Natural killer cell (primary cell): ENCODE measurements at regions of chr11 and their contacts with region 1.

Region 1: GRCh38 chr11:33700425-33701271 is at the start of gene C11orf91:
- DNase-seq: peak; percentile 95 to 97
- ATAC-seq: peak; percentile 96 to 98 (median 97)
- H3K4me3 ChIP-seq: peak within 1 kb of the TSS; percentile 69
- H3K4me3 Mint-ChIP-seq: peak within 1 kb of the TSS; percentile 89
- H3K27ac ChIP-seq: no peak within 1 kb of the TSS
- H3K27ac Mint-ChIP-seq: peak within 1 kb of the TSS; percentile 74 to 80
- H3K4me1 ChIP-seq: peaks cover 12% of the 10 kb centered on the region
- H3K4me1 Mint-ChIP-seq: peaks cover 16% of the 10 kb centered on the region in 2 donors
- H3K27me3 ChIP-seq: no peaks in the 10 kb centered on the region
- H3K27me3 Mint-ChIP-seq: peaks cover 24 to 25% of the 10 kb centered on the region in 2 donors
- CTCF ChIP-seq: no peak
- total RNA-seq, gene C11orf91: not detected

Region 2: GRCh38 chr11:33606762-33607161 is 93.9 kb before region 1 on chr11:
- intact Hi-C with region 1: no loop called
- DNase-seq: no peak
- ATAC-seq: no peak
- H3K4me3 ChIP-seq: no peak overlapping the region
- H3K4me3 Mint-ChIP-seq: no peak overlapping the region
- H3K27ac ChIP-seq: no peak overlapping the region
- H3K27ac Mint-ChIP-seq: no peak overlapping the region
- H3K4me1 ChIP-seq: no peaks in the 10 kb centered on the region
- H3K4me1 Mint-ChIP-seq: no peaks in the 10 kb centered on the region
- H3K27me3 ChIP-seq: no peaks in the 10 kb centered on the region
- H3K27me3 Mint-ChIP-seq: peaks cover 7 to 42% of the 10 kb centered on the region in 2 donors
- CTCF ChIP-seq: no peak

Region 3: GRCh38 chr11:33670250-33671011 is 30.2 kb before region 1 on chr11:
- intact Hi-C with region 1: no loop called
- DNase-seq: no peak
- ATAC-seq: no peak
- H3K4me3 ChIP-seq: no peak overlapping the region
- H3K4me3 Mint-ChIP-seq: no peak overlapping the region
- H3K27ac ChIP-seq: no peak overlapping the region
- H3K27ac Mint-ChIP-seq: no peak overlapping the region
- H3K4me1 ChIP-seq: no peaks in the 10 kb centered on the region
- H3K4me1 Mint-ChIP-seq: peaks cover 0 to 8% of the 10 kb centered on the region in 2 donors
- H3K27me3 ChIP-seq: no peaks in the 10 kb centered on the region
- H3K27me3 Mint-ChIP-seq: peaks cover 13 to 47% of the 10 kb centered on the region in 2 donors
- CTCF ChIP-seq: no peak

Region 4: DNA sequence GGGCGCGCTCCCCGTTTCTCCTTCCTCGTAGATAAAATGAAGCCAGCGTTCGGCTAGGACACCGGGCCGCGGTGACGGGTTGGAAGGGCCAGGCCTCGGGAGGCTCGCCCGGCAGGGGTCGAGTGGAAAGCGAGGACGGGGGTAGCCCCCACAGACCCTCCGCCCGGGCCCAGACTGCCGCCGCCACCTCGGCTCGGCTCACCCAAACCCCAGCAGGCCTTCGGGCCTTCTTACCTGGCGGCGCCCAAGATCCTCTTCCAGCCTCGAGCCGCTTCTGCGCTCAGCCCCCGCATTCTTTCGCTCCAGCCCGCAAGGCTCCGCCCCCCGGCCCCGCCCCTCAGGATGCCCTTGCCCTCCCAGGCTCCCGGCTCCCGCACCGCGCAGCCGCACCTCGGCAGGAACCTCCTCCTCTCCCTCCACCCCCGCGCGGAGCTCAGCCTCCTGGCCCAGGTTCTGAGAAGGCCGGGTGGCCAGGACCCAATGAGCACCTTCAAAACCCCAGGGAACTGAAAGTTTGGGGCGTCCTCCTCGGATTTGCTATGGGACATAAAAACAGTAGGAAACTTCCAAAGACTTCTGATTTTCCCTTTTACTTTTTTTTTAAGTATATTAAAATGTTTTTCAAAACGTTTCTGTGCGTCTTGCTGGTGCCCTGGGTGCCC is 35.6 kb after region 1 on chr11 and contains the start of gene CD59:
- intact Hi-C with region 1: loop called (anchors 2 kb)
- DNase-seq: peak; percentile 67 to 93
- ATAC-seq: peak; percentile 70 to 79 (median 72)
- H3K4me3 ChIP-seq: peak within 1 kb of the TSS; percentile 58
- H3K4me3 Mint-ChIP-seq: peak within 1 kb of the TSS; percentile 89
- H3K27ac ChIP-seq: peak within 1 kb of the TSS; percentile 43
- H3K27ac Mint-ChIP-seq: peak within 1 kb of the TSS; percentile 70 to 85
- H3K4me1 ChIP-seq: peaks cover 21% of the 10 kb centered on the region
- H3K4me1 Mint-ChIP-seq: peaks cover 23 to 25% of the 10 kb centered on the region in 2 donors
- H3K27me3 ChIP-seq: no peaks in the 10 kb centered on the region
- H3K27me3 Mint-ChIP-seq: no peaks in the 10 kb centered on the region
- CTCF ChIP-seq: no peak
- total RNA-seq, gene CD59: 25.0 to 29.4 (median 26.4) TPM

Region 5: DNA sequence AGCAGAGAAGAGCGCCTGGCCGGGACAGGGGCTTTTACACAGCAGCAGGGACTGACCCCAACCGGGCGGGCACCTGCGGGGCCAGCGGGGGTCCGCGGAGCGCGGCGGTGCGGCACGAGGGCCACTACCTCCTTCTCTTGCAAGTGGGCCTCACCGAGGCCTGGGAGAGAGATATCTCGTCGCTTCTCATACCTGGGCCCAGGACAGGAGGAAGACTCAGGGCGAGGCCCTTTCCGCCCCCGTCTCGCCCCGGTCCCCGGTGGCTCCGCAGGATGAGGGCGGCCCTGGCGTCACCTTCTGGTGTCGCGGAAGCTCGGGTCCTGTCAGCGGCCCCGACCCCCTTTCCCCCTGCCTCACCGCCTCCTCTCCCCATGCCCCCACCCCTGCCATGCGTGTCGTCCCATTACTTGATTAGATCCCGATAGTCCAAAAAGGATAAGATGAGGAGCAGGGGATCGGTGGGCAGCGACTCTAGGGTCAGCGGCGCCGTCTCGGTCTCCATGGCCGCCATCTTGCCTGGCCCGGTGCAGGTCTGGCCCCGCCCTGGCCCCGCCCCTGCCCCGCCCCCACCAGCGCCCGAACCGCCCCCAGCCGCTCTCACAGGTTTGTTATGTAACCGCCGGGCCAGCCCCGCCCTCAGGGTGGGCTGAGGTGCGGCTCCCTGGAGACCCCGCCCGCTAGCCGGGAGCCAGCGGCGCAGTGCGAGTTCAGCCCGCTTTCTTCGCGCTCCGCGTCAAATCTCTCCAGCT is 73.5 kb after region 1 on chr11 and contains the start of gene FBXO3:
- intact Hi-C with region 1: loop called (anchors 1 kb)
- DNase-seq: peak; percentile 79 to 93
- ATAC-seq: peak; percentile 88 to 95 (median 91)
- H3K4me3 ChIP-seq: peak within 1 kb of the TSS; percentile 76
- H3K4me3 Mint-ChIP-seq: peak within 1 kb of the TSS; percentile 96
- H3K27ac ChIP-seq: peak within 1 kb of the TSS; percentile 67
- H3K27ac Mint-ChIP-seq: peak within 1 kb of the TSS; percentile 84 to 94
- H3K4me1 ChIP-seq: peaks cover 31% of the 10 kb centered on the region
- H3K4me1 Mint-ChIP-seq: peaks cover 38 to 46% of the 10 kb centered on the region in 2 donors
- H3K27me3 ChIP-seq: peaks cover 3% of the 10 kb centered on the region
- H3K27me3 Mint-ChIP-seq: peaks cover 23 to 26% of the 10 kb centered on the region in 2 donors
- CTCF ChIP-seq: no peak
- total RNA-seq, gene FBXO3: 54.9 to 64.7 (median 56.2) TPM

Region 6: DNA sequence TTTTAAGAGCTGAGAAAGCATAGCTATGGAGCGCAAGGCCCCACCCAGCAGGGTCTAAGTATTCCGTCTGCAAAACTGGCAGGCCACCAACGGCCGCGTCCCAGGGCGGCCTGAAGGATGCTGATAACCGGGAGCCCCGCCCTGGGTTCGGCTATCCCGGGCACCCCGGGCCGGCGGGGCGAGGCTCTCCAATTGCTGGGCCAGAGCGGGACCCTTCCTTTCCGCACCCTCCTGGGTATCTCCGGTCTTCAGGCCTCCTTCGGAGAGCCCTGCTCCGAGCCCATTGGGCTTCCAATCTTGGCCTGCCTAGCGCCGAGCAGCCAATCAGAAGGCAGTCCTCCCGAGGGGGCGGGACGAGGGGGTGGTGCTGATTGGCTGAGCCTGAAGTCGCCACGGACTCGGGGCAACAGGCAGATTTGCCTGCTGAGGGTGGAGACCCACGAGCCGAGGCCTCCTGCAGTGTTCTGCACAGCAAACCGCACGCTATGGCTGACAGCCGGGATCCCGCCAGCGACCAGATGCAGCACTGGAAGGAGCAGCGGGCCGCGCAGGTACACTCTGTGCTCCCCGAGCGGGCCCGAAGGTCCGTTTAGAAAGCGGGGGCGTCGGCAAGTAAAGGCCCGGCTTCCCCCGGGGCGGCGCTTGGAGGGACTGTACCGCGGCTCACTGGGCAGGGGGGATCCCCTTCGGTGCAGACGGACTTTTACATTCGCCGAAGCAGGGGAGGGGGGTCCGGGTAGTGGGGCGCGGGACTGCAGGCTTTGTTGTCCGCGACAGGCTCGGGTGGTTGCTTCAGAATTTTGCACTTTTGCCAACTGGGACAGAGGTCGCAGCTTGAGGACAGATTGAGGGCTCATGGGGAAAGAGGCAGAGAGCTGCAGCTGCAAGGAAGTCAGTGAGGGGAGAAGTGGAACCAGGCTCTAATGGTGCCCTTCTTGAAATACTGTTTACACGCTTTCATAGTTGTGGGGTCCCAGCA is 738.2 kb after region 1 on chr11 and contains the start of gene CAT:
- intact Hi-C with region 1: loop called (anchors 2 kb)
- DNase-seq: peak; percentile 97
- ATAC-seq: peak; percentile 94 to 98 (median 95)
- H3K4me3 ChIP-seq: peak within 1 kb of the TSS; percentile 67
- H3K4me3 Mint-ChIP-seq: peak within 1 kb of the TSS; percentile 95
- H3K27ac ChIP-seq: peak within 1 kb of the TSS; percentile 69
- H3K27ac Mint-ChIP-seq: peak within 1 kb of the TSS; percentile 91 to 98
- H3K4me1 ChIP-seq: peaks cover 11% of the 10 kb centered on the region
- H3K4me1 Mint-ChIP-seq: peaks cover 30 to 36% of the 10 kb centered on the region in 2 donors
- H3K27me3 ChIP-seq: no peaks in the 10 kb centered on the region
- H3K27me3 Mint-ChIP-seq: no peaks in the 10 kb centered on the region
- CTCF ChIP-seq: no peak
- total RNA-seq, gene CAT: 31.0 to 43.9 (median 36.3) TPM